Right ventricle myocardium inferior (tissue), 1 donor: ENCODE measurements at regions of chr12 and their contacts with region 1.

Region 1: GRCh38 chr12:117236456-117237001 is 46.3 kb upstream of the FBXO21 start:
- DNase-seq: peak; percentile 86
- ATAC-seq: peak; percentile 42

Region 2: DNA sequence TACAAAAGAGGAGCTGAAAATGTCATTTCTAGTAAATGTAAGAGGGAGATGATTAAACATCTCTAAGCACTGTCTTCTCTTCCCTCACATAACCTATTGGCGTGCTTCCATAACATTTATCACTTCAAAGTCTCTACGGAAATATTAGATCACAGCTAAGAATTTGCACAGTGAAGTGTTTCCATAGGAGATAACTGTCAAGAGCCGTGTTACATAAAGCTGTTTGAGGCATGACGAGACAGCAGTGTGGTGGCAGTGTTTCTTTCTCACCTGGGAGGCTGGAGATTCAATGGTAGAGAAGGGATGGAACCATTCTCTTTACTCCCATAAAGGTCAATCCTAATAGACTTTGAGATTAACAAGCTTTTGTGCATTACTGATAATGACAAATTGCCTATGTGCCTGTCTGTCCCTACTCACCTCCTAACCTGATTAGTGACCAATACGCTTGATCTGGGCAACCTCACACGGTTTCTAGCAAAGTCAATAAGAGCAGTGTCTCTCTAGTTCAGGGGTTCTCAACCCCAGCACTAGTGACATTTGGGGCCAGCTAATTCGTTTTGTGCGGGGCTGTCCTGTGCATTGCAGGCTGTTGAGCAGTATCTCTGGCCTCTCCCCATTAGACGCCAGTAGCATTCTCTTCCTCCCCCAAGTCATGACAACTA is 290.5 kb before region 1 on chr12:
- intact Hi-C with region 1: no loop called
- DNase-seq: no peak
- ATAC-seq: no peak

Region 3: DNA sequence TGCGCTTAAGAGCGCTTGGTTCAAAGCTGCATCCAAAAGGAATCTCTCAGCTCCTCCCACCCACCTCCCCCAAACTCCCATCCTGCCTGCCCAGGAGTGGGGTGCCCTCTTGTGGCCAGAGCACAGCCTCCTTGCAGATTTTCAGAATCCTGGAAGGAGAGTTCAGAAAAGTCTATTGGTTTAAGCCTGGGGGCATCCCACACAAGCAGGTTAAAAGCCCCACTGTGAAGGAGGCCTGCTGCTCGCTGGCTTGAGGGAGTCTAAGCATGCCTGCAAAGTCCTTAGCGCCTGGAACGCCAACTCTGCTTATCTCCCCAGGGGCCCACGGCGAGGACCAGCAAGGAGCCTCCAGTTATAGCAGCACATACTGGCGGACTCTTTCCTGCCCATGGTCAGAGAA is 435.2 kb after region 1 on chr12:
- intact Hi-C with region 1: loop called (anchors 10 kb)
- DNase-seq: no peak
- ATAC-seq: no peak